ENCODE measurements at regions of chr1 and their contacts with region 1.

Region 1: DNA sequence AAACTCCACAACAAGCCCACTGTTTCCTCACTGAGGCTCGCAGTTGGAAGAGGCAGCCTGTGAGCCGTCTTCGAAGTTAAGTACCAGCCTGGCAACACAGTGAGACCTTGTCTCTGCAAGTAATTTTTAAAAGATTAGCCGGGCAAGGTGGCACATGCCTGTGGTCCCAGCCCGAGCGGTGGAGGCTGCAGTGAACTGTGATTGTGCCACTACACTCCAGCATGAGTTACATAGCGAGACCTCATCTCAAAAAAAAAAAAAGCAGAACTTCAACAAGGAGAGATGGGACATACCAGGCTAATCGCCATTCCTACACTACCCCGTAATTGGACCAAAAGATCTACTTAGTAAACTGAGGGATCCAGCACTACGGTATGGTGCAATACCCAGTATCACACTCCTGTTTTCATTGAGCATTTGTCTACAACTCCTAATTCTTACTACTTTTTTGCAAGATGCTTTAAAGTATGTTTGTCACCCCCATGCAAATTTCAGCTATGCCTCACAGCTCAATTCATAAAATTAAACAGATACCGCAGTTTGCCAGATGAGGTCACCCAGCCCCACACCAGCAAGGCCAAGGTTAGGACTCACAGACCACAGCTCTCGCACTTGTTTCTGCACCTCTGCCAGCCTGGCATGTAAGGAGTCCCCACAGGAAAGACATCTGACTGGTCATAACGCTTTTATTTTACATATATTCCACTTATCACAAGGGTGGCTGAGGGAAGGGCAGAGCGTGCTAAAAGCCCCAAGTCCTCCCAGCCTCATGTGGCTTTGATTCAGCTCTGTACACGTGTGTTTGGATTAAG is 21.0 kb downstream of the SDE2 start:
- DNase-seq: peak in 1 of 2 donors; percentile 38
- ATAC-seq: no peak
- H3K4me3 ChIP-seq: no peak overlapping the region
- H3K27ac ChIP-seq: no peak overlapping the region
- H3K4me1 ChIP-seq: peaks cover 16% of the 10 kb centered on the region
- H3K27me3 ChIP-seq: no peaks in the 10 kb centered on the region
- CTCF ChIP-seq: no peak

Region 2: GRCh38 chr1:225318706-225319575 is 659.2 kb before region 1 on chr1:
- intact Hi-C with region 1: loop called (anchors 5 kb)
- DNase-seq: no peak
- ATAC-seq: peak in 3 of 4 donors; percentile 66 to 84 (median 70)
- H3K4me3 ChIP-seq: no peak overlapping the region
- H3K27ac ChIP-seq: no peak overlapping the region
- H3K4me1 ChIP-seq: no peaks in the 10 kb centered on the region
- H3K27me3 ChIP-seq: peaks cover 0 to 2% (median 0%) of the 10 kb centered on the region in 3 donors
- CTCF ChIP-seq: peak; percentile 64

Region 3: DNA sequence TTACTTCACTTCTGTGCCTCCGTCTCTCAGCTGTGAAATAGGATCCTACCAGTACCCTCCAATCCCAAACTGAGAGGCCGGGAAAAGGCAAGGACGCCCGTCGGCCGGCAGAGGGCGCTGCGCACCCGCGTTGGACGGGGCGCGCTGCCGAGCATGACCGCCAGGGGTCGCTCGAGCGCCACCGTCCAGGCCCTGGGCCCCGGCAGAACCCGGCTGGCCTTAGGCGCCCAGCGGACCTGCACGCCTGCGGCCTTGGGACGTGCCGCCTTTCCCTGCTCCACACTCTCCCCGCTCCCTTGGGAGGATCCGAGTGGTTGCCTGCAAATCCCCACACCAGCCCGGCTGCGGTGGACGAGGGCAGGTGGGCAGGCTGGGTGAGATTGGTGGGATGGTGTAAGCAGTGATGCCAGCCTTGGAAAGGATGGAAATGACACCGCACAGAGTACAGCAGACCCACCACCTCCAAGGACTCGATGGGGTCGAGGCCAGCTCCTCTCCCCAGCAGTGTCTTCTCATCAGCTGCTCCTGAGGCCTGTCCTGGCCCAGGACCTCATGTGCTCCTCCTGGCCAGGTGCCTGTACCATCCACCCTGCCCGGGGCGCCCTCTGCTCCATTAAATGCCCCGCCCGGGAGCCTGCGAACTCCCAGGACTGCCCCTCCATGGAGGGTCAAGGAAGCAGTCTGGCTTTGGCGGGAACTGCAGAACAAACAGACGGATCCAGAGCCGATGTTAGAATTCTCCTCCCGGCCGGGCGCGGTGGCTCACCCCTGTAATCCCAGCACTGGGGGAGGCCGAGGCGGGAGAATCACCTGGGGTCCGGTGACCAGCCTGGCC is 502.9 kb before region 1 on chr1:
- intact Hi-C with region 1: loop called (anchors 2 kb)
- DNase-seq: peak; percentile 64 to 85
- ATAC-seq: peak; percentile 91 to 95 (median 93)
- H3K4me3 ChIP-seq: peak overlapping the region; percentile 37
- H3K27ac ChIP-seq: no peak overlapping the region
- H3K4me1 ChIP-seq: peaks cover 14% of the 10 kb centered on the region
- H3K27me3 ChIP-seq: no peaks in the 10 kb centered on the region
- CTCF ChIP-seq: peak; percentile 100

Region 4: GRCh38 chr1:225772323-225772768 is 205.8 kb before region 1 on chr1:
- intact Hi-C with region 1: loop called (anchors 5 to 10 kb)
- DNase-seq: peak; percentile 80 to 89
- ATAC-seq: peak; percentile 90 to 93 (median 90)
- H3K4me3 ChIP-seq: no peak overlapping the region
- H3K27ac ChIP-seq: peak overlapping the region; percentile 5
- H3K4me1 ChIP-seq: peaks cover 31% of the 10 kb centered on the region
- H3K27me3 ChIP-seq: no peaks in the 10 kb centered on the region
- CTCF ChIP-seq: peak; percentile 87

Region 5: GRCh38 chr1:225777583-225778336 is 200.4 kb before region 1 on chr1 and contains the start of gene SRP9:
- intact Hi-C with region 1: loop called (anchors 5 to 10 kb)
- DNase-seq: peak; percentile 99 to 100
- ATAC-seq: peak; percentile 99 to 100 (median 100)
- H3K4me3 ChIP-seq: peak within 1 kb of the TSS; percentile 76
- H3K27ac ChIP-seq: peak within 1 kb of the TSS; percentile 89
- H3K4me1 ChIP-seq: peaks cover 40% of the 10 kb centered on the region
- H3K27me3 ChIP-seq: no peaks in the 10 kb centered on the region
- CTCF ChIP-seq: peak; percentile 82
- total RNA-seq, gene SRP9: 137 to 199 (median 154) TPM

Region 6: GRCh38 chr1:225881969-225882693 is 96.0 kb before region 1 on chr1 and contains the start of gene TMEM63A:
- intact Hi-C with region 1: loop called in 1 of 2 experiments (anchors 10 kb)
- DNase-seq: peak; percentile 94 to 98
- ATAC-seq: peak; percentile 88 to 93 (median 90)
- H3K4me3 ChIP-seq: peak within 1 kb of the TSS; percentile 100
- H3K27ac ChIP-seq: peak within 1 kb of the TSS; percentile 92
- H3K4me1 ChIP-seq: peaks cover 41% of the 10 kb centered on the region
- H3K27me3 ChIP-seq: peaks cover 0 to 1% (median 0%) of the 10 kb centered on the region in 3 donors
- CTCF ChIP-seq: peak; percentile 39
- total RNA-seq, gene TMEM63A: 12.7 to 17.9 (median 16.0) TPM

Region 7: DNA sequence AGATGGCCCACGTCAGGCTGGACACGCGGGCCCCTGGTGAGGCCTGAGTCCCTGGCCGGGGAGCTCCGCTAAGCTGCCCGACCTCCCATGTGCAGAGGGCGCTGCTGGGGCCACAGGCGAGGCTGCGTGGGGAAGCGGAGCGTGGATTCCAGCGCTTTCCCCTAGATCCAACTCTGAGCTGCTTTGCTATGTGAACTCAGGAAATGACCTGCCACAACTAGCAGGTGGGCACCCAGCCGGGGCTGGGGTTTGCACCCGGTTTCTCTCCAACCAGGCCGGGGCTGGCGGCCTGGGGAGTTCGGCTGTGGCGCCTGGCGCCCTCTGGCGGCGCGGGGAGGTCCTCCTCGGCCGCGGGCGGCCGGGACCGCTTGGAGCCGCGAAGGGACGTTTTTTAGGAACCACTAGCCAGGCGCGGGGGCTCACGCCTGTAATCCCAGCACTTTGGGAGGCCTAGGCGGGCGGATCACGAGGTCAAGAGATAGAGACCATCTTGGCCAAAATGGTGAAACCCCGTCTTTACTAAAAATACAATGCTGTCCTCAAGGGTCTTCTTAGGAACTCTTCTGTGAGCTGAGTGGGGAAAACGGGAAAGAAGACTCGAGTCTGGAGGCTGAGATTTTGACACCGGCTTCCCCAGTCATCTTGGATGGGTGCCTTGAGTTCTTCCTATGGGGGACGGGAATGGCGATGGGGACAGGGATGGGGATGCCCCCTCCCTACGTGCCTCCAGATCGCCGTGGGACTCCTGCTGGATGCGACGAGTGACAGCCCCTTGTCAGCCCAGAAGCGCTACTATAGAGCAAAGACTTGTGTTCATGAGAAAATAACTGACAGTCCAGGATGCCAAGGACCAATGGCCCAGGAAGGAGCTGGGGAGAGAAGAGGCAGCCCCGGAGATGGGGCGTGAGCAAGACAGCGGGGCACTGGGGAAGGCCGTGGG is 66.7 kb before region 1 on chr1:
- intact Hi-C with region 1: loop called in 1 of 2 experiments (anchors 5 kb)
- DNase-seq: peak; percentile 70 to 84
- ATAC-seq: peak; percentile 85 to 96 (median 88)
- H3K4me3 ChIP-seq: peak overlapping the region; percentile 31
- H3K27ac ChIP-seq: no peak overlapping the region
- H3K4me1 ChIP-seq: no peaks in the 10 kb centered on the region
- H3K27me3 ChIP-seq: no peaks in the 10 kb centered on the region
- CTCF ChIP-seq: peak; percentile 88

Measured in psoas muscle (tissue), 8 donors.